Endothelial cell of umbilical vein (primary cell): ENCODE measurements at regions of chr1 and their contacts with region 1.

Region 1: GRCh38 chr1:156065212-156065611 is 4.3 kb downstream of the RAB25 start:
- DNase-seq: no peak
- H3K4me3 ChIP-seq: no peak overlapping the region
- H3K27ac ChIP-seq: no peak overlapping the region
- H3K4me1 ChIP-seq: peaks cover 6% of the 10 kb centered on the region
- H3K27me3 ChIP-seq: no peaks in the 10 kb centered on the region
- CTCF ChIP-seq: no peak
- POLR2A ChIP-seq: no peak

Region 2: DNA sequence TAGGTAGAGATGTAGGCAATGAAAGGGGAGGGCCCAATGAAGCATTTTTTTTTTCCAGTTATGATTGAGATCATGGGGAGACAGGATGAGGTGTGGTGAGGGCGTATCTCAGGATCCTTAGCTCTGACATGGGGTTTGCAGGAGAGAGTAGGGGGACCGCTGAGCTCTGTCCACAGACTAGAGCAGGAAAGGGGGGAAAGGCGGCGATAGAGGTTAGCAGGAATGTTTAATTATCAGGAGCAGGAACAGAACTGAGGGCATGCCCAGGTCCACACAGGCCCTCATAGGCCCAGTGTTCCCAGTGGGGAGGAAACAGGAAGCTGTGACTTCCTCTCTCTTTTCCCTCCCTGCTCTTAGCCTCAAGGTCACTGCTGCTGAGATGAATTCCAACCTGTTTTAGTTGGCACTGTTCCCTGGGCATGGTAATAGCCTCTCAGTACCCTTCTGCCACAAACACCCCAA is 124.7 kb before region 1 on chr1:
- CTCF ChIA-PET with region 1: interaction called, 29 read pairs
- POLR2A ChIA-PET with region 1: no interaction called
- dilution Hi-C with region 1: no loop called
- intact Hi-C with region 1: loop called (anchors 1 kb)
- DNase-seq: peak; percentile 84
- H3K4me3 ChIP-seq: peak overlapping the region in 1 of 3 experiments; percentile 21
- H3K27ac ChIP-seq: peak overlapping the region; percentile 90
- H3K4me1 ChIP-seq: peaks cover 28% of the 10 kb centered on the region
- H3K27me3 ChIP-seq: no peaks in the 10 kb centered on the region
- CTCF ChIP-seq: no peak
- POLR2A ChIP-seq: peak; percentile 87

Region 3: GRCh38 chr1:155989242-155990004 is 75.8 kb before region 1 on chr1:
- CTCF ChIA-PET with region 1: interaction called, 15 read pairs
- POLR2A ChIA-PET with region 1: no interaction called
- dilution Hi-C with region 1: no loop called
- intact Hi-C with region 1: no loop called
- DNase-seq: peak; percentile 76
- H3K4me3 ChIP-seq: no peak overlapping the region
- H3K27ac ChIP-seq: no peak overlapping the region
- H3K4me1 ChIP-seq: peaks cover 6% of the 10 kb centered on the region
- H3K27me3 ChIP-seq: no peaks in the 10 kb centered on the region
- CTCF ChIP-seq: peak; percentile 95 to 98
- POLR2A ChIP-seq: no peak

Region 4: DNA sequence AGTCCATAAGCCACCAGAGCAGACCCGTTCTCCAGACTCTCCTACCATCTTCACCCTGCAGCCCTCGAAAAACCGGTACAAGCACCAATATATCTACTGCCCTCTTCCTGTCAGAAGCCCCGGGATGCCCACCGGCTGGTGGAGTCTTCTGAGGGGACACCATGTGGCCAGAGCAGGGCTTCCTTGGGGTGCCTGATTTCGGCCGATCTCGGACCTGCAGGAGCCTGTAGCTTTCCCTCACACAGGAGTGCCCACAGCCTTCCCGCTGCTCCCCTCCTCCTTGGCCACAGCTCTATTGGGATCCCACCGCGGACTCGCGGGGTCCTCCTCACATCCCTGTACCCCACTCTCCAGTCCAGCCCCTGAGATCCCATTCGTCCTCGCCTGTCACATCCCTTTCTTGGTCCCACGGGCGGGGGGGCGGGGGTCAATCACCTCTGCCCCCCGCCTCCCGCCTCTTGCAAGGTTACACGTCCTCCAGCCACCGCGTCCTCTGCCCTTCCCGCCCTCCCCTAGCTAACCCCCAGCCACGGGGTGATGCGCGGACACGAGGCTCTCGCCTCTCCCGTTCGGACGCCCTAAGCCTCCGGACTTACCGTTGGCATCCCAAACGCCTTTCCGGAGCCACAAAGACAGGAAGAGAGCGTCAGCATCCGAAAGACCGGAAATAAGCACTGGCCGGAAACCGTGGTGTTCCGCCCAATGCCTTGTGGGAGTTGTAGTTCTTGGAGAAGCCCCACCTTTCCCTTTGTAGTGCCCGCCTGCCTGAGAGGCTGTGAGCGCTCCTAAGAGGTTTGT is 44.7 kb before region 1 on chr1 and contains the start of gene SSR2:
- CTCF ChIA-PET with region 1: interaction called, 92 read pairs
- POLR2A ChIA-PET with region 1: no interaction called
- dilution Hi-C with region 1: no loop called
- intact Hi-C with region 1: no loop called
- DNase-seq: peak; percentile 96
- H3K4me3 ChIP-seq: peak within 1 kb of the TSS; percentile 27 to 81 (median 78)
- H3K27ac ChIP-seq: peak within 1 kb of the TSS; percentile 44
- H3K4me1 ChIP-seq: peaks cover 10% of the 10 kb centered on the region
- H3K27me3 ChIP-seq: no peaks in the 10 kb centered on the region
- CTCF ChIP-seq: no peak
- POLR2A ChIP-seq: peak; percentile 97
- total RNA-seq, gene SSR2: 339 and 362 TPM in 2 replicates

Region 5: GRCh38 chr1:156033011-156033410 is 32.2 kb before region 1 on chr1:
- CTCF ChIA-PET with region 1: interaction called, 18 read pairs
- POLR2A ChIA-PET with region 1: no interaction called
- dilution Hi-C with region 1: no loop called
- intact Hi-C with region 1: no loop called
- DNase-seq: peak; percentile 63
- H3K4me3 ChIP-seq: no peak overlapping the region
- H3K27ac ChIP-seq: no peak overlapping the region
- H3K4me1 ChIP-seq: peaks cover 7% of the 10 kb centered on the region
- H3K27me3 ChIP-seq: no peaks in the 10 kb centered on the region
- CTCF ChIP-seq: no peak
- POLR2A ChIP-seq: no peak